B cell (primary cell): ENCODE measurements at regions of chr1 and their contacts with region 1.

Region 1: GRCh38 chr1:150162862-150163706 is 13.4 kb downstream of the PLEKHO1 start:
- DNase-seq: peak; percentile 73
- ATAC-seq: peak; percentile 10
- H3K4me3 ChIP-seq: peak overlapping the region; percentile 5 to 70 (median 28)
- H3K4me3 Mint-ChIP-seq: peak overlapping the region; percentile 93
- H3K27ac ChIP-seq: peak overlapping the region; percentile 95
- H3K27ac Mint-ChIP-seq: peak overlapping the region; percentile 99
- H3K4me1 ChIP-seq: peaks cover 78 to 88% of the 10 kb centered on the region in 2 donors
- H3K4me1 Mint-ChIP-seq: peaks cover 85% of the 10 kb centered on the region
- H3K27me3 ChIP-seq: no peaks in the 10 kb centered on the region
- H3K27me3 Mint-ChIP-seq: no peaks in the 10 kb centered on the region
- CTCF ChIP-seq: no peak

Region 2: DNA sequence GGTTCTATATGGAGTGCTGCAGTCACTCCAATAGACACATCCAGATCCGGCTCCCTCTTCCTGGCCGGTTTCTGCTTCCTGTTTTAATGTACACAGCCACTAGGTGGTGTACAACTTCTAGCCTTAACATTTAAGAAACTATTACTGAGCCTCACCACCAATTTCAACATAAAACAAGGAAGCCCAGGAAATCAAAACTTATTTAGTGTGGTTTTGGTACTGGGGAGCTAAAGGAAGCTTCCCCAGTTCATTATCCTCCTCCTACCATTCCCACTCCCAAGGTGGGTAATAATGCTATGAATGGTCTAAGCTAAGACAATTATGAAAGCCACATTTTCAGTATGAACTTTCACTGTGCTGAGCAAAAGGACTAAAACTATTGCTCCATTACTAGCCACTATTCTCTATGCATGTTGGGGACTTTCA is 200.9 kb before region 1 on chr1:
- CTCF ChIA-PET with region 1: interaction called, 15 read pairs
- POLR2A ChIA-PET with region 1: interaction called, 7 read pairs
- intact Hi-C with region 1: no loop called
- DNase-seq: peak; percentile 81
- ATAC-seq: peak; percentile 69
- H3K4me3 ChIP-seq: no peak overlapping the region
- H3K4me3 Mint-ChIP-seq: no peak overlapping the region
- H3K27ac ChIP-seq: no peak overlapping the region
- H3K27ac Mint-ChIP-seq: no peak overlapping the region
- H3K4me1 ChIP-seq: peaks cover 7% of the 10 kb centered on the region in 2 donors
- H3K4me1 Mint-ChIP-seq: peaks cover 4% of the 10 kb centered on the region
- H3K27me3 ChIP-seq: peaks cover 0 to 4% (median 0%) of the 10 kb centered on the region in 4 experiments
- H3K27me3 Mint-ChIP-seq: peaks cover 9% of the 10 kb centered on the region
- CTCF ChIP-seq: peak; percentile 90

Region 3: GRCh38 chr1:150089846-150090520 is 73.1 kb before region 1 on chr1:
- CTCF ChIA-PET with region 1: interaction called, 12 read pairs
- POLR2A ChIA-PET with region 1: interaction called, 9 read pairs
- intact Hi-C with region 1: loop called (anchors 5 kb)
- DNase-seq: peak; percentile 75
- ATAC-seq: peak; percentile 80
- H3K4me3 ChIP-seq: peak overlapping the region in 4 of 5 experiments; percentile 0 to 45 (median 15)
- H3K4me3 Mint-ChIP-seq: peak overlapping the region; percentile 71
- H3K27ac ChIP-seq: peak overlapping the region; percentile 75 to 85
- H3K27ac Mint-ChIP-seq: peak overlapping the region; percentile 91
- H3K4me1 ChIP-seq: peaks cover 25 to 27% of the 10 kb centered on the region in 2 donors
- H3K4me1 Mint-ChIP-seq: peaks cover 38% of the 10 kb centered on the region
- H3K27me3 ChIP-seq: no peaks in the 10 kb centered on the region
- H3K27me3 Mint-ChIP-seq: no peaks in the 10 kb centered on the region
- CTCF ChIP-seq: no peak

Region 4: DNA sequence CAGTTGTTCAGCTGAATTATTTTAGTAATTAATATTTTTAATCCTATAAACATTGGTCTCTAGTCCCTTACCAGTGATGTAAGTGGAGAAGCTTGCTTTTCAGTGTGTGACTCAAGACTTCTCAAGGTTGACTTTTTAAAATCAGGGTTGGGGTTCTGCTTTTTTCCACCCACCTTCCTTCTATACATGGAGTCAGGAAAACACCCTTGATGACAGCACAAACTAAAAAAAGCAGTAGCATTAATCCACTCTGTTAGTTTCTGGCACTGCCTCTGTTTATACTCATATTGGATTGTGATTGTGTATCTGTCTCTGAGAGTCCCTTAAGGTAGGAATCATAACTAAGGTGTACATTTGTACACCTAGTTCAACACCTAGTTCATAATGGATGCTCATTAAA is 21.6 kb before region 1 on chr1:
- CTCF ChIA-PET with region 1: interaction called, 16 read pairs
- POLR2A ChIA-PET with region 1: interaction called, 3 read pairs
- intact Hi-C with region 1: no loop called
- DNase-seq: no peak
- ATAC-seq: no peak
- H3K4me3 ChIP-seq: no peak overlapping the region
- H3K4me3 Mint-ChIP-seq: no peak overlapping the region
- H3K27ac ChIP-seq: no peak overlapping the region
- H3K27ac Mint-ChIP-seq: no peak overlapping the region
- H3K4me1 ChIP-seq: peaks cover 7 to 10% of the 10 kb centered on the region in 2 donors
- H3K4me1 Mint-ChIP-seq: peaks cover 18% of the 10 kb centered on the region
- H3K27me3 ChIP-seq: no peaks in the 10 kb centered on the region
- H3K27me3 Mint-ChIP-seq: no peaks in the 10 kb centered on the region
- CTCF ChIP-seq: no peak

Region 5: GRCh38 chr1:150235852-150236613 is 72.9 kb after region 1 on chr1 and contains the start of gene ANP32E:
- CTCF ChIA-PET with region 1: no interaction called
- POLR2A ChIA-PET with region 1: interaction called, 5 read pairs
- intact Hi-C with region 1: loop called (anchors 2 kb)
- DNase-seq: peak; percentile 98
- ATAC-seq: peak; percentile 89
- H3K4me3 ChIP-seq: peak within 1 kb of the TSS; percentile 83 to 98 (median 86)
- H3K4me3 Mint-ChIP-seq: no peak within 1 kb of the TSS
- H3K27ac ChIP-seq: peak within 1 kb of the TSS; percentile 97 to 98
- H3K27ac Mint-ChIP-seq: no peak within 1 kb of the TSS
- H3K4me1 ChIP-seq: peaks cover 23% of the 10 kb centered on the region in 2 donors
- H3K4me1 Mint-ChIP-seq: peaks cover 16% of the 10 kb centered on the region
- H3K27me3 ChIP-seq: no peaks in the 10 kb centered on the region
- H3K27me3 Mint-ChIP-seq: no peaks in the 10 kb centered on the region
- CTCF ChIP-seq: no peak
- total RNA-seq, gene ANP32E: 42.4 and 47.1 TPM in 2 replicates